ENCODE measurements at regions of chr1 and their contacts with region 1.

Region 1: DNA sequence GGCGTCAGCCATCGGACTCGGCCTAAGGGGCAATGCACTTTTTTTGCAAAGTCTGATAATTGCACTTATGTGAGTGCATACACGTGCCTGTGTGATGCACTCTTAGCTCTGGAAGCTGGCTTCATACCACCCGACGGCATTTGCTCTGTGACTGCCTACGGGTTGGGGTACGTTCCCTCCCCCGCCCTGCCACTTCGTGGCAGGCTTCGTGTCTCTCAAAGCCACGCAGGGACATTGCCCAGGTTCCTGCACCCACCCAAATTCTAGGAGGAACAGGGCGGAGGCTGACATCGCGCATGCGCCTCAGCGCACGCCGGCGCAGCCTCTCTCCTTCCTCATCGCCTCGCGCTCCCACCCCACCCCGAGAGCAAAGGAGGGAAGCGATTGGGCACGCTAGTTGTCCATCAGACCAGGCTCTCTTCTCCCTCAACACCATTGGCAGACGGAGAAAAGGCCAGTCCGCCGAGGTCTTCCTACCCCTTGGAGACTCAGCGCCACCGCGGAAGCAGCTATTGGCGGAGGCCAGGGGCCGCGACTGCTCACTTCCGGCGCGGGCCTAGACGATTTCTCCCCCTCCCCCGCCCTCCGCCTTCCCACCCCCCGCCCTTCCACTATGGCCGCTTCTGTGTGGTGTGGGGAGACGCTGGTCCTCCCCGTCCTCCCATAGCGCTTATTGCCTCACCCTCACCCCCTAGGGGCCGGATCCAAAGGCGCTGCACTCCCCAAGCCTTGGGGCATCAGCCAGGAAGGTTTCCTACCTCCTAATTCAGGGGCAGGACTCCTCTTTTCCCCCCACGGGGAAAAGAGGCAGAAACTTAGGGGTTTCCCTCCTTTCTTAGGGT is at the start of gene INTS3:
- DNase-seq: peak; percentile 100
- ATAC-seq: peak; percentile 99 to 100 (median 100)
- H3K4me3 ChIP-seq: peak within 1 kb of the TSS; percentile 44 to 98 (median 82)
- H3K27ac ChIP-seq: peak within 1 kb of the TSS; percentile 86 to 100 (median 98)
- H3K4me1 ChIP-seq: peaks cover 0 to 38% (median 22%) of the 10 kb centered on the region in 12 donors
- H3K27me3 ChIP-seq: no peaks in the 10 kb centered on the region
- CTCF ChIP-seq: peak in 3 of 12 donors; percentile 13 to 25 (median 14)
- POLR2A ChIP-seq: no peak
- total RNA-seq, gene INTS3: 19.6 to 33.2 (median 30.7) TPM

Region 2: GRCh38 chr1:153633716-153634665 is 93.7 kb before region 1 on chr1 and contains the start of gene CHTOP:
- intact Hi-C with region 1: loop called in 1 of 10 experiments (anchors 5 kb)
- DNase-seq: peak; percentile 97 to 98 (median 98)
- ATAC-seq: peak; percentile 90 to 94 (median 93)
- H3K4me3 ChIP-seq: peak within 1 kb of the TSS; percentile 64 to 99 (median 82)
- H3K27ac ChIP-seq: peak within 1 kb of the TSS; percentile 99 to 100 (median 100)
- H3K4me1 ChIP-seq: peaks cover 4 to 82% (median 51%) of the 10 kb centered on the region in 12 donors
- H3K27me3 ChIP-seq: no peaks in the 10 kb centered on the region
- CTCF ChIP-seq: no peak
- POLR2A ChIP-seq: peak; percentile 56 to 95
- total RNA-seq, gene CHTOP: 48.4 to 92.0 (median 67.7) TPM

Region 3: GRCh38 chr1:153677718-153678505 is 49.8 kb before region 1 on chr1:
- intact Hi-C with region 1: loop called in 2 of 10 experiments (anchors 5 kb)
- DNase-seq: peak in 4 of 5 donors; percentile 50 to 71 (median 52)
- ATAC-seq: peak; percentile 44 to 78 (median 67)
- H3K4me3 ChIP-seq: peak overlapping the region; percentile 35 to 76 (median 60)
- H3K27ac ChIP-seq: peak overlapping the region in 11 of 12 donors; percentile 3 to 83 (median 68)
- H3K4me1 ChIP-seq: peaks cover 0 to 26% (median 19%) of the 10 kb centered on the region in 12 donors
- H3K27me3 ChIP-seq: peaks cover 0 to 28% (median 7%) of the 10 kb centered on the region in 9 donors
- CTCF ChIP-seq: peak; percentile 82 to 96 (median 93)
- POLR2A ChIP-seq: no peak

Measured in heart left ventricle (tissue), 16 donors.